ENCODE measurements at regions of chr7 and their contacts with region 1.

Region 1: DNA sequence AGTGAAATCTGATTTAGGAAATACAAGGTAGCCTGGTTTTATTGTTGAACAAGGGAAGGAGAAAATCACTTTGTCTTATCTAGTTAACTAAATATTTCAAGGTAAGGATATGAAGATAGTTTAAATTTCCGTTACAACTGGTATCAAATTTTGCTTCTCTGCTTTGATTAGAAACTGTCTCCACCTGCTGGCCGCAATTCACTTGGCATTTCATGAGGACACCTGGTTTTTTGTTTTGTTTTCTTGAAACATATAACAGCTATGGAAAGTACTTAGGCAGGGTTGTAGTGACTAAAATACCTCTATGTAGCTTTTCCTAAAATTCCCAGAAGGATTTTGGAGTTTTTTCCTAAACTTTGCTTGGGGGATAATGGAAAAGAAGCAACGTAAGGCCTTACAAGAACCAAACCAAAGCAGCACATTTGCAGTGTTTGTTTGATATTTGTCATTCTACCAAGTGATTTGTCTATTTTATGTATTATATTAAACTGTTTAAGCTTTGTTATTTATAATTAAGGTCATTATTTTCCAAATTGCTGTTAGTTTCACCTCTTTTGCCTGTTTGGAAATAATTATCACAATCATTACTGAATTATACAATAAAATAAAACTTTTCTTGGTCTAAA is 73.6 kb downstream of the AHCYL2 start:
- DNase-seq: no peak

Region 2: DNA sequence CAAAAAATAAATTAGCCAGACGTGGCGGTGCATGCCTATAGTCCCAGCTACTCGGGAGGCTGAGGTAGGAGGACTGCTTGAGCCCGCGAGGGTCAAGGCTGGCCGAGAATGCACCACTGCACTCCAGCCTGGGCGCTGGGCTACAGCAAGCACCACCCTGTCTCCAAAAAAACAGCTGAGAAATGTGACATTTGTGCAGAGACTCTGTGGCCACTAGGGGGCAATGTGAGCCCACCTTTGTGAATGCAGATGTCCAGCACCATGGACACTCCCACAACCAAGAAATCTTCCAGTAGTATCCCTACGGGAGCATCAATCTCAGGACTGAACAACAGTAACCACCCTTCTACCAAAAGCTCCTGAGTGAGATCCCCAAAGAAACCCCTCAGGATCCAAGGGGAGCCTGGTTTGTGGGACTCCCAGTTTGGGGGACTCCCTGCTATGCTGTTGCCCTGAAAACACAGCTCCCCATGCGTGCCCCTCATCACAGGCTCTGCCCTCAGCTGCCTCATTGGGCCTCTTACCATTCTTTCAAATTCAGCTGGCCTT is 79.8 kb before region 1 on chr7:
- intact Hi-C with region 1: loop called (anchors 2 kb)
- DNase-seq: peak; percentile 81

Region 3: DNA sequence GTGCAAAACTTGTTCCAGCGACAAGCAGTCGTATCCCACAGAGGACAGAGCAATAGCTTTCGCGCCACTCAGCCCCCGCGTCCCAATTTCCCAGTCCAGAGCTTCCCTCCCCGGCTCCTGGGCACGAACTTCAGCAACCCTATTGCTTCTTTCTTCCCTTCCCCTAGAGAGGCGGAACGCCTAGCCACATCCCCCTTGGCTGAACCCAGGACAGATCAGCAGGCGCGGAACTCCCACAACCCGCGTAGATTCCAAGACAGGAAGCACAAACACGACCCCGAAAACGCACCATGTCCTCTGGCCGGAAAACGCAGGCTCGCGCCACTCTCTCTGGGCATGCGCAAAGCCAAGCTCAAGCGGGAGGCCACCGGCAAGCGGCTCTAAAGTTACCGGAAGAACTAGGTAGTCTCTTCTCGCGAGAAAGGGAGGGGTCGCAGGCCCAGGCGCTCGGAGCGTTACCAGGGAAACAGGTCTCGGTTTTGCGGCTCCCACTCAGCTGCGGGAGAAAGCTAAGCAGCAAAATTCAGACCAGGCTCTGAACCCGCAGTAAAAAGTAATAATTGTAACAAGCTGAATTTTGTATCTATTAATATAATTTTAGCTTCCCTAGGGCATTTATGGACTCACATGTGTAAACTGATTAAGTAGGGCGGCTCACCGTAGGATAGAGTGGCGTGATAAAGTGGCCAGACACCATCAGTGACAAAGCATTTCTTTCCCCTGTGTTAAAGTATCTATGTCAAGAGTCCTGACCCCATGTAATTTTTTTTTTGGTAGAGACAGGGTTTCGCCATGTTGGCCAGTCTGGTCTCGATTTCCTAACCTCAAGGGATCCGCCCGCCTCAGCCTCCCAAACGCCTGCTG is 906.9 kb after region 1 on chr7 and contains the start of gene TMEM209:
- intact Hi-C with region 1: no loop called
- DNase-seq: peak; percentile 96
- total RNA-seq, gene TMEM209: 8.5 TPM

Measured in cardiac septum (tissue), 1 donor.